Left lung (tissue), 14 donors: ENCODE measurements at regions of chr15 and their contacts with region 1.

Region 1: DNA sequence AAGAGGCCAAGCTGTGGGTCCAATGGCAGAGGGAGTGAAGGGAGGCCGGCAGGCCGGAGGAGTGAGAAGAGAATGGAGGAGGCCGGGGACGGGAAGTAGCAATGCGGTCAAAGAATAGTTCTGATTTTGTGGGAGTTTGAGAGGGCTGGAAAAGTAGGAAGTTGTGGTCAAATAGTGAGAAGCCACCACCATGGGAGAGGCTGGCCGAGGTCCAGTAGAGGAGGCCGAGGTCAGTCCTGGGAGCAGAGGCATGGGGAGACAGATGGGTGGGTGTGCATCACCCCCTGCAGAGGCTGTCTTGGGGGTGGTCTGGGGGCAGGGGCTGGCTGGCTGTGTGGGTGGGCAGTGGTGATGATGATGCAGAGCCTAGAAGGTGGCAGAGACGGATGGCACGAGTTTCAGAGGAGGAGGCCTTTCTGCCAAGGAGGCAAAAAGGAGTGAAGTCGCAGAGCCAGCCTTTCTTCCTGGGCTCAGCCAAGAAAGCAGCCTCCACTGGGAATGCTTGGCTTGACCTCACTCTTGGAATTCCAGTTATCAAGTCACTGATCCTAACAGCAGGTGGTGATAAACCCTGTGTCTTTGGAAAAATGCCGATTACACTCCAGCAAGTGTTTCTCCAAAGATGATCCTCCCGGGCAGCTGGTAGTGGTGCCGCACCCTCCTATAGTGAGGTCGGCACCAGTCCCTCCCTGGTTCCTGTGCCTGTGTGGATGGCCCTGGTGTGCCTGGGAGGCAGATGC is 57.3 kb downstream of the ARNT2 start:
- DNase-seq: no peak
- ATAC-seq: peak; percentile 43
- H3K4me3 ChIP-seq: no peak overlapping the region
- H3K27ac ChIP-seq: no peak overlapping the region
- H3K4me1 ChIP-seq: peaks cover 0 to 9% of the 10 kb centered on the region in 2 donors
- H3K27me3 ChIP-seq: peaks cover 0 to 45% of the 10 kb centered on the region in 2 donors
- CTCF ChIP-seq: no peak

Region 2: DNA sequence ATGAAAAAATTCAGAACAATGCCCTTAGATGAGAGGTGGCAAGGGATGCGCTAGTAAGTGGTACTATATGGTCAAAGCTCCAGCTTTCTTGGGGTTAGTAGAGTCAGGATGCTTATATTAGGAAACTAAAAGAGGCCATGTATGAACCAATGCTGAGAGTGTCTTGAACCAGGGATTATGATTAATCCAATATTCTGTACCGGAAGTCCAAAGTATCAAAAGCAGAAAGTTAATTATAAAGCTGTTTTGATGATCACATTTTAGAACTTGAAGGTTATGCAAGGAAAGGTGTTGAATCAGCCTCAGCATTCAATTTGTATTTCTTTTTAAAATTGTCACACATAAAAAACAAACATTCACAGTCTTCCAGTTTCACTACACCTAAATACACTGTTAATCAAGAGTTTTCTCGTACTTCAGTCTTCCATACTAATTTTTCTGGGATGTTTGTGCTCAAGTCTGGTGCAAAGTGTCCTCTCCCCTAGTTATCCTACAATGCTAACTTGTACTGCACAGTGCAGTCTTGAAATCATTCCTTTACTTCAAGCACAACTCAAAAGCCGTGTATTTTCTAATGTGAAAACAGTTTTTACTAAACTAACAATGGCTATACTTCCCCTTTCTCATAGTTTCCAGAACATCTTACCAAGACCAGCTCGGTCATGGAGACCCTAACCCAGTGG is 319.5 kb before region 1 on chr15:
- intact Hi-C with region 1: no loop called
- DNase-seq: no peak
- ATAC-seq: no peak
- H3K4me3 ChIP-seq: no peak overlapping the region
- H3K27ac ChIP-seq: no peak overlapping the region
- H3K4me1 ChIP-seq: no peaks in the 10 kb centered on the region
- H3K27me3 ChIP-seq: no peaks in the 10 kb centered on the region
- CTCF ChIP-seq: no peak

Region 3: DNA sequence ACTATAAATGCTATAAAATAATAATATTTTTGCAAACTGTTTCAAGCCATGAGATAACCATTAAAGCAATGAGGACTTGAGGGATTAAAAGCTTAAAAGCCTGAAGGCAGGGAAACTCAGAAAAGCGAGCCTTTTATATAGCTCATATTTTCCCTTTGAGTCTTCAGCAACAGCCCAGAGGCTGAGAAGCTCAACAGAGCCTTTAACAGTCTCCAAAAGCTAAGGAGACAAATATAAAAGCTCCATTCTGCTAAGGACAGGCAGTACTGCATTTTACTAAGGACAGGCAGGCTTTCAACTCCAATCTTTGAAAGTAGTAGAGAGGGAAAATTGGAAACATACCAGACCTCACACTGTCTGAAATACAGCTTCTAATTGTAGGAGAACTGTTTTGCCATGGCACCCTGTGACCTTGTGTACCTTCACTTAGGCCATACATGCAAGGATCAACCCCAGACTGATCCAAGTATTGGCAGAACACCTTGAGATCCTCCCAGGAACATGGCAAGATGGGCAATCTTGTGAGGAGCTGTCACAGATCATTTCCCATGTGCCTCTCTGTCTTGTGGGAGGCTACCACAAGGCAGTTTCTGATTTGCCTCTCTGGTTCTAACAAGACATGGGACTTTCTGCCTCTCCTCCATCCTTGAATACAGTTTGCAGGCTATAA is 110.5 kb before region 1 on chr15:
- intact Hi-C with region 1: no loop called
- DNase-seq: no peak
- ATAC-seq: no peak
- H3K4me3 ChIP-seq: no peak overlapping the region
- H3K27ac ChIP-seq: no peak overlapping the region
- H3K4me1 ChIP-seq: no peaks in the 10 kb centered on the region
- H3K27me3 ChIP-seq: no peaks in the 10 kb centered on the region
- CTCF ChIP-seq: no peak

Region 4: DNA sequence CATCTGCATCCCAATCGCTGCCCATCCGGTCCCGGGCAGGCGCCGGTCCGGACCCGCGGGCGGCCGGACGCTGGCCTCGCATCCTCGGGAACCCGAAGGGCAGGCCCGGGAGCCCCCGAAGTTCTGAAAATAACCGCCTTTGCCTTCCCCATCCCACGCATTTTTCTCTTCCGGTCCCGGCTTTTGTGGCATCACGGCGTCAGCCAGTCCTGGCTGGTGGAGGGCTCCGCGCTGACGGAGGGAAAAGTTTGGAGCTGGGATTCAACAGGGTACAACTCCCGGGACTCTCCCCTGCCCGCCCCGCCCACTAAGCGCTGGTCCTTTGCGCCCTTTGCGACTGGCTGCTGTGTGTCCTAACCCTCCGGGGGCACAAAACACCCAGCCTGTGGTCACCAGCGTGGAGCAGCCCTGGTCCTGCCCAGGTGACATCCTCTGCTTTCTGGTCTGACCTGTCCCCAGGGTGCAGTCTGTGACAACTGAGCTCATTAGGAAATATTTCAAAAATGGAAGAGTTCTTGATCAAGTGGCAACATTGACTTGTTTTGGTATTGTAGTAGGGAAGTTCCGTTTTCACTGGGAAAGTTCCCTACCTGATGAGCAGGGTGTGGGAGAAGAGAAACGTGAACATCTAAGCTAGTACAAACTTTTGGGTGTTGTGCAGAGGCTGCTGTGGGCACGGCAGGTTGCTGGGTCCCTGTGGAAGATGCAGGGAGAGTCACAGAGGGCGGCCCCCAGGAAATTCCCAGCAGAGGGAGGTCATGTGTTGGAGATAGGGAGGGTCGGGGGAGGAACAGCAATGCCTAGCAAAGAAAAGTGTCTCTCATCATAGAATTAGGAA is 56.6 kb before region 1 on chr15:
- intact Hi-C with region 1: no loop called
- DNase-seq: peak in 3 of 4 donors; percentile 19 to 77 (median 45)
- ATAC-seq: peak; percentile 16
- H3K4me3 ChIP-seq: peak overlapping the region; percentile 38 to 41
- H3K27ac ChIP-seq: no peak overlapping the region
- H3K4me1 ChIP-seq: peaks cover 0 to 11% of the 10 kb centered on the region in 2 donors
- H3K27me3 ChIP-seq: peaks cover 6 to 75% of the 10 kb centered on the region in 2 donors
- CTCF ChIP-seq: no peak

Region 5: DNA sequence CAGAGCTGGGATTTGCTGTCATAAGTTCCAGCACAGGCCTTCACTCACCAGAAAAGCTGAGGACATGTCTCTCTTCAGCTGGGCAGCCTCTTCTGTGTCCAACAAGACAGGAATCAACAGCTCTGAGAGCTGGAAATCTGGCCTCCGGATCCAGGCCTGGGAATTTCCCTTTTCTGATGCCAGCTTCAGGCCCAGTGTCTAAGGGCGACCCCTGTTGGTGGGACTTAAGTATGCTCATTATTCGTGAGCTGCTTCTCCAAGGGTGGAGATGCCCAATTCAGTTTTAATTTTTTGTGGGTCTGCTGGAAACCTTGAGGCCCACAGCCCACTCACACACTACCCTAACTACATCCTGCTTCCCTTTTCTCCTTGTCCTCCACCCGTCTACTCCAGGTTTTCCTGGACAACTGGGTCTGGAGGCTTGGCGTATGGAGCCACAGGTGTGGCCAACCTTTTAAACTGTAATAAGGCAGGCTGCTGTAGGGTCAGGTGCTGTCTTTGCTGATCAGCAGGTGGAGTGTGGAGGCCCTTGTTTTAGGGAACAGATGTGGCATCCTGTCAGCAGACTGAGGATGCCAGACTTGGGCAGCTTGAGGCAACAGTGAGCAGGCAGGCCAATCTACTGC is 315.0 kb after region 1 on chr15:
- intact Hi-C with region 1: loop called in 1 of 2 experiments (anchors 5 kb)
- DNase-seq: peak in 3 of 4 donors; percentile 65 to 87 (median 73)
- ATAC-seq: peak; percentile 63
- H3K4me3 ChIP-seq: no peak overlapping the region
- H3K27ac ChIP-seq: peak overlapping the region; percentile 33 to 75
- H3K4me1 ChIP-seq: peaks cover 19 to 46% of the 10 kb centered on the region in 2 donors
- H3K27me3 ChIP-seq: peaks cover 12 to 45% of the 10 kb centered on the region in 2 donors
- CTCF ChIP-seq: peak; percentile 67 to 83